CD4-positive, alpha-beta T cell (primary cell): ENCODE measurements at regions of chr1 and their contacts with region 1.

Region 1: DNA sequence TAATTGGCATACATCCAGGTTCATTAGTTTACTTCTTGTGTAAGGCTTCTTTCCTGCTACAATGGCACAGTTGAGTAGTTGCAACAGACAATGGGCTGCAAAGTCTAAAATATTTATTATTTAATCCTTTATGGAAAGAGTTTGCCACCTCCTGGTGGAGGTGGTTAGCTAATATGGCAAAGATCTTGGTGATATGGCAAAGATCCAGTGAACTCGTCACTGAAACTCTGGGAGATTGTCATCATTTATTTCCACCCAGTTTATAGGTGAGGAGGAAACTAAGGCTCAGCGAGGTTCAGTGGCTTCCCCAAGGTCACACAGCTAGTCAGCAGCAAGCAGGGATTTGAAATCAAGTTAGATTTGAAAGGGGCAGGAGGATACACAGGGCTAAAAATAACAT is 16.1 kb upstream of the IFFO2 start:
- DNase-seq: peak in 5 of 14 experiments; percentile 23 to 73 (median 66)
- ATAC-seq: peak; percentile 59
- H3K4me3 ChIP-seq: no peak overlapping the region
- H3K4me3 Mint-ChIP-seq: no peak overlapping the region
- H3K27ac ChIP-seq: no peak overlapping the region
- H3K27ac Mint-ChIP-seq: no peak overlapping the region
- H3K4me1 ChIP-seq: peaks cover 3% of the 10 kb centered on the region
- H3K4me1 Mint-ChIP-seq: no peaks in the 10 kb centered on the region
- H3K27me3 ChIP-seq: no peaks in the 10 kb centered on the region
- H3K27me3 Mint-ChIP-seq: no peaks in the 10 kb centered on the region
- CTCF ChIP-seq: peak; percentile 72

Region 2: DNA sequence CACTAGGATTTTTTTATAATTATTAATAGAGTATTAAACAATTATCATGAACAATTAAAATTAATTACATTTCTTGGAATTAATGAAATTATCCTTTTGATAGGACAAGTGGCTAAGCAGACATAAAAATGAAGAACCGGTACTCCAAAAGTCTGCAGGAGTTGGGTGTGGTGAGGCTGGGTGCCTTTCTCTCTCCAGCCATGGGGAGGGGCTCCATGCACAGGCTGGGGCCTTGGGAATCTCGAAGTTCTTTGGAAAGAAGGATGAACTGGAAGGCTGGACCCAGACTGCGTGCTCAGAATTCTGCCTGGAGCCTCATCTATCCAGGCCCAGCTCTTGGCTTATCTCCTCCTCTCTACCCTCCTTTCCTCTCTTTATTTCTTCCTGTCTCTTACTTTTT is 1123.3 kb before region 1 on chr1:
- CTCF ChIA-PET with region 1: no interaction called
- POLR2A ChIA-PET with region 1: no interaction called
- intact Hi-C with region 1: no loop called
- DNase-seq: no peak
- ATAC-seq: no peak
- H3K4me3 ChIP-seq: no peak overlapping the region
- H3K4me3 Mint-ChIP-seq: no peak overlapping the region
- H3K27ac ChIP-seq: no peak overlapping the region
- H3K27ac Mint-ChIP-seq: no peak overlapping the region
- H3K4me1 ChIP-seq: no peaks in the 10 kb centered on the region
- H3K4me1 Mint-ChIP-seq: no peaks in the 10 kb centered on the region
- H3K27me3 ChIP-seq: no peaks in the 10 kb centered on the region
- H3K27me3 Mint-ChIP-seq: peaks cover 6% of the 10 kb centered on the region
- CTCF ChIP-seq: no peak

Region 3: DNA sequence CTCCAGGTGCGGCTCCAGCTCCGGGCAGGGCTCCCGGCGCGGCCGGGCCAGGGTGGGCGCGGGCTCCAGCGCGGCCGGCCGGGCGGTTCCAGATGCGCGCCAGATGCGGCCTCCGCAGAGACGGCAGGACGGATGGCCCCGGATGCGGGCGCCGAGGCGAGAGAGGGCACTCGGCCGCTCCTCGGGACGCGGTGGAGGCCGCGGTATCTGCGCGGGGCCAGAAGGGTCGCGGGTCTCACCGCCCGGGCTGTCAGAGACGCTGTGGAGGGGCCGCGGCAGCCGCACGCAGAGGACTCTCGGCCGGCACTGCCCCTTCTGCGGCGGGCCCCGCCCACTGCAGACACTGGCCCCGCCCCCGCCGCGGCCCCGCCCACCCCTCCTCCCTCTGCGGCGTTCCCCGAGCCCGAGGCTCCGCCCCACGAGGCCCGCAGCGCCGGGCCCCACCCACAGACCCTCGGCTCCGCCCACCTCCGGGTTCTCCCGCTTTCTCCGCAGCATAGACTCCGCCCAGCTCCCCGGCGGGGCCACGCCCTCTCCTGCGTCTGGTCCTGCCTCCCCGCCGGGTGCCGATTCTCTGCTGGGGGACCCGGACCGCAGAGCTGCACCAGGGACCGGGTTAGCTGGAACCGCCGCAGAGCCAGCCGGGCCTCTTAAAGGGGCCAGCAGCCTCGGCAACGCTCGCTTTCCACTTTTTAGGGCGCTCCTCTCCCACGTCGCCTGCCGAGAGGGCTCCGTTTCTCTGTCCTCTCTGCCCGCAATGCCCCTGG is 16.0 kb before region 1 on chr1 and contains the start of gene IFFO2:
- CTCF ChIA-PET with region 1: interaction called, 3 read pairs
- POLR2A ChIA-PET with region 1: interaction called, 16 read pairs
- intact Hi-C with region 1: no loop called
- DNase-seq: peak in 13 of 14 experiments; percentile 97 to 100 (median 98)
- ATAC-seq: peak; percentile 76
- H3K4me3 ChIP-seq: peak within 1 kb of the TSS; percentile 83
- H3K4me3 Mint-ChIP-seq: peak within 1 kb of the TSS; percentile 99
- H3K27ac ChIP-seq: peak within 1 kb of the TSS in 1 of 2 donors; percentile 74
- H3K27ac Mint-ChIP-seq: peak within 1 kb of the TSS; percentile 99
- H3K4me1 ChIP-seq: peaks cover 59% of the 10 kb centered on the region
- H3K4me1 Mint-ChIP-seq: peaks cover 65% of the 10 kb centered on the region
- H3K27me3 ChIP-seq: no peaks in the 10 kb centered on the region
- H3K27me3 Mint-ChIP-seq: no peaks in the 10 kb centered on the region
- CTCF ChIP-seq: no peak
- total RNA-seq, gene IFFO2: 106 to 112 TPM

Region 4: GRCh38 chr1:19096036-19096833 is 123.7 kb after region 1 on chr1:
- CTCF ChIA-PET with region 1: no interaction called
- POLR2A ChIA-PET with region 1: no interaction called
- intact Hi-C with region 1: loop called in 1 of 2 experiments (anchors 5 kb)
- DNase-seq: peak in 6 of 14 experiments; percentile 26 to 48 (median 40)
- ATAC-seq: no peak
- H3K4me3 ChIP-seq: no peak overlapping the region
- H3K4me3 Mint-ChIP-seq: no peak overlapping the region
- H3K27ac ChIP-seq: no peak overlapping the region
- H3K27ac Mint-ChIP-seq: no peak overlapping the region
- H3K4me1 ChIP-seq: no peaks in the 10 kb centered on the region
- H3K4me1 Mint-ChIP-seq: peaks cover 4% of the 10 kb centered on the region
- H3K27me3 ChIP-seq: no peaks in the 10 kb centered on the region
- H3K27me3 Mint-ChIP-seq: no peaks in the 10 kb centered on the region
- CTCF ChIP-seq: peak; percentile 38